CD8-positive, alpha-beta T cell (primary cell): ENCODE measurements at regions of chr1 and their contacts with region 1.

Region 1: GRCh38 chr1:182476625-182477024 is 26.7 kb downstream of the RGSL1 start:
- DNase-seq: no peak
- ATAC-seq: no peak
- H3K4me3 ChIP-seq: no peak overlapping the region
- H3K4me3 Mint-ChIP-seq: no peak overlapping the region
- H3K27ac ChIP-seq: no peak overlapping the region
- H3K27ac Mint-ChIP-seq: no peak overlapping the region
- H3K4me1 ChIP-seq: no peaks in the 10 kb centered on the region
- H3K4me1 Mint-ChIP-seq: no peaks in the 10 kb centered on the region
- H3K27me3 ChIP-seq: peaks cover 0 to 2% of the 10 kb centered on the region in 2 experiments
- H3K27me3 Mint-ChIP-seq: peaks cover 25% of the 10 kb centered on the region
- CTCF ChIP-seq: no peak

Region 2: DNA sequence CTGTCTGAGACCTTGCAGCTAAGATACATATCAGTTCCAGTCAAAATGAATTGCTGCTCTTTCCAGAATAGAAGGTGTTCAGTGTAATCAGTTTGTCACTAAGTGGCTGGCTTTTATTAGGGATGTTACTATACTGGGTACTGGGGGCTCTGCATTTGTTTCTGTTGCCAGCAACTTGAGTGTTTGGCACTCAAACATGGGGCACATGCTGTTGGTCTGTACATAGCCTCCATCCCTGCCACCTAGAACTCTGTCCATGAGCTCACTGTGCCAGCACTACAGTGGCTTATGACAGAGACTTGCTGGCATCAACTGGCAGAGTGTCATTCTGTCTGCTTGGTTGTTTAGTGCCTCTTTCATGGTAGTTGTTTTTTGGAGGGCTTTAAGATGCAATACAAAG is 18.4 kb after region 1 on chr1:
- CTCF ChIA-PET with region 1: no interaction called
- POLR2A ChIA-PET with region 1: no interaction called
- intact Hi-C with region 1: loop called in 1 of 2 experiments (anchors 1 kb)
- DNase-seq: no peak
- ATAC-seq: no peak
- H3K4me3 ChIP-seq: no peak overlapping the region
- H3K4me3 Mint-ChIP-seq: no peak overlapping the region
- H3K27ac ChIP-seq: no peak overlapping the region
- H3K27ac Mint-ChIP-seq: no peak overlapping the region
- H3K4me1 ChIP-seq: no peaks in the 10 kb centered on the region
- H3K4me1 Mint-ChIP-seq: no peaks in the 10 kb centered on the region
- H3K27me3 ChIP-seq: no peaks in the 10 kb centered on the region
- H3K27me3 Mint-ChIP-seq: no peaks in the 10 kb centered on the region
- CTCF ChIP-seq: no peak